MCF 10A (cell line): ENCODE measurements at regions of chr11 and their contacts with region 1.

Region 1: DNA sequence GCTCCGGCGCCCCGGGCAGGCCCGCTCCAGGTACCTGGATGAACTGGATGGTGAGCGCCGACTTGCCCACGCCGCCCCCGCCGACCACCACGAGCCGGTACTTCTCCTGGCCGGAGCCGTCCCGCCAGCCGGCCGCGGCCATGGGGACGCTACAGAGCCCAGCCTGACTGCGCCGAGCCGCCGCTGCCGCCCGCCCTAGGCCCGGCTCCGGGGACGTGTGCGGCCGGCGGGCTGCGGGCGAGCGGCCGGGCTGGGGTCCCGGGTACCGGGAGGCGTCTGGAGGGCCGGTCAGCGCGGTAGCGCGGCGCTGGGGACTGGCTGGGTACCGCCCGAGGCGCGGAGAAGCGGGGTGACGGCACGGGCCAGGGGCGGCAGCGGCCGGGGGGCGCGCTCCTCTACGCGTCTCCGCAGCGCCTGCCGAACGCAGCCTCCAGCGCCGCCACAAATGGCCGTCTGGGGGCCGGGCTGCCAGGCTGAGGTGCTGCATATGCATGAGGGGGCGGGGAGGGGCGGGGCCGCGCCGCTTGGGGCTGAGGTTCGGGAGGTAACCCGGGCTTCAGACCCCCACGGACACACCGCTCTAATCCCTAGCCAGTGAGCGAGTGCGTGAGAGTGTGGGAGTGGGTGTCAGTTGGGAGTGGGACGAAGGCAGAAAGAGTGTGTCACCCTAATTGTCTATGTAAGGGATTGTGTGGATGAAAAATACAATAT is at the start of gene RRAS2:
- DNase-seq: peak; percentile 74
- H3K4me3 Mint-ChIP-seq: peak within 1 kb of the TSS; percentile 94
- H3K27ac Mint-ChIP-seq: peak within 1 kb of the TSS; percentile 97
- H3K4me1 Mint-ChIP-seq: peaks cover 32% of the 10 kb centered on the region
- H3K27me3 Mint-ChIP-seq: no peaks in the 10 kb centered on the region
- CTCF ChIP-seq: no peak
- total RNA-seq, gene RRAS2: 128 and 145 TPM in 2 replicates

Region 2: GRCh38 chr11:14300661-14301304 is 58.1 kb before region 1 on chr11:
- CTCF ChIA-PET with region 1: interaction called, 22 read pairs
- POLR2A ChIA-PET with region 1: interaction called, 4 read pairs
- intact Hi-C with region 1: loop called (anchors 1 kb)
- DNase-seq: peak; percentile 75
- H3K4me3 Mint-ChIP-seq: no peak overlapping the region
- H3K27ac Mint-ChIP-seq: no peak overlapping the region
- H3K4me1 Mint-ChIP-seq: peaks cover 6% of the 10 kb centered on the region
- H3K27me3 Mint-ChIP-seq: no peaks in the 10 kb centered on the region
- CTCF ChIP-seq: peak; percentile 82

Region 3: GRCh38 chr11:14320020-14320419 is 38.9 kb before region 1 on chr11:
- CTCF ChIA-PET with region 1: no interaction called
- POLR2A ChIA-PET with region 1: interaction called, 13 read pairs
- intact Hi-C with region 1: no loop called
- DNase-seq: no peak
- H3K4me3 Mint-ChIP-seq: no peak overlapping the region
- H3K27ac Mint-ChIP-seq: no peak overlapping the region
- H3K4me1 Mint-ChIP-seq: peaks cover 36% of the 10 kb centered on the region
- H3K27me3 Mint-ChIP-seq: no peaks in the 10 kb centered on the region
- CTCF ChIP-seq: no peak

Region 4: GRCh38 chr11:14342906-14343305 is 16.0 kb before region 1 on chr11:
- CTCF ChIA-PET with region 1: interaction called, 6 read pairs
- POLR2A ChIA-PET with region 1: interaction called, 37 read pairs
- intact Hi-C with region 1: no loop called
- DNase-seq: no peak
- H3K4me3 Mint-ChIP-seq: no peak overlapping the region
- H3K27ac Mint-ChIP-seq: no peak overlapping the region
- H3K4me1 Mint-ChIP-seq: peaks cover 15% of the 10 kb centered on the region
- H3K27me3 Mint-ChIP-seq: no peaks in the 10 kb centered on the region
- CTCF ChIP-seq: no peak

Region 5: DNA sequence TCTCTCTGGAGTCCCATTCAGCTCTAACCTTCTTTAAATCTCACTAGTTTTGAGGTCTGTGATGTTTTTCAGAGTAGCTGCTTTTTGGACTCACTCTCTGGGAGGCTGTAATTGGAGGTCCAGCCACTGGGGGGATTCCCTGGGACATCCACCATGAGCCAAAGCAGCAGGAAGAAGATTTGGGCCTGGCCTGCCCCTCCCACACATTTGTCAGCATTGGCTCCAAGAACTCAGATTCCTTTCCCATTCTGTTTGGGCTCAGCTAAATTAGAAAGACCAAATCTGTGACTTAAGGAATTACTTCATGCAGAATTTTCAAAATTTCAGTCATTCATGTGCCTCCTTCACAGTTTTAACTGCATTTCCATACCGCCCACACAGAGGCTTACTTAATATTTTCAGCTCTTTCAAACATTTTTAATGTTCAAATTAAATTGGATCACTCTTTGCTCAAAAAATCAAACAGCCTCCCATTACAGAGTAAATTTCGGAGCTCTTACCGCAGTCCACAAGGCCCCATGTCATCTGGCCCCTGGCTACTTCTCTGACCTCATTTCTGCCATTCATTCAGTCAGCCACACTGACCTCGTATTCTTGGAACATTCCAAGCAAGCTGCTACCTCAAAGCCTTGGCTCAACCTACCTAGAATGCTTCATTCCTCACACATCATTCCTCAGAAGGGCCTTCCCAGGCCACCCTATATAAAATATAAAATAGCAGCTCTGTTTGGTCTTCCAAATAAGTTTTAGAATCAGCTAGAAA is 54.6 kb after region 1 on chr11:
- CTCF ChIA-PET with region 1: interaction called, 6 read pairs
- POLR2A ChIA-PET with region 1: interaction called, 26 read pairs
- intact Hi-C with region 1: loop called (anchors 5 kb)
- DNase-seq: peak; percentile 47
- H3K4me3 Mint-ChIP-seq: no peak overlapping the region
- H3K27ac Mint-ChIP-seq: no peak overlapping the region
- H3K4me1 Mint-ChIP-seq: peaks cover 60% of the 10 kb centered on the region
- H3K27me3 Mint-ChIP-seq: no peaks in the 10 kb centered on the region
- CTCF ChIP-seq: no peak

Region 6: GRCh38 chr11:14506532-14506931 is 147.6 kb after region 1 on chr11:
- CTCF ChIA-PET with region 1: no interaction called
- POLR2A ChIA-PET with region 1: no interaction called
- intact Hi-C with region 1: no loop called
- DNase-seq: no peak
- H3K4me3 Mint-ChIP-seq: no peak overlapping the region
- H3K27ac Mint-ChIP-seq: no peak overlapping the region
- H3K4me1 Mint-ChIP-seq: peaks cover 8% of the 10 kb centered on the region
- H3K27me3 Mint-ChIP-seq: no peaks in the 10 kb centered on the region
- CTCF ChIP-seq: no peak

Region 7: GRCh38 chr11:14852571-14853177 is 493.8 kb after region 1 on chr11:
- CTCF ChIA-PET with region 1: no interaction called
- POLR2A ChIA-PET with region 1: no interaction called
- intact Hi-C with region 1: no loop called
- DNase-seq: no peak
- H3K4me3 Mint-ChIP-seq: no peak overlapping the region
- H3K27ac Mint-ChIP-seq: no peak overlapping the region
- H3K4me1 Mint-ChIP-seq: peaks cover 10% of the 10 kb centered on the region
- H3K27me3 Mint-ChIP-seq: peaks cover 19% of the 10 kb centered on the region
- CTCF ChIP-seq: no peak